ENCODE measurements at regions of chr5 and their contacts with region 1.

Region 1: GRCh38 chr5:66987949-66988838 is 208.4 kb downstream of the CD180 start:
- DNase-seq: peak; percentile 53
- H3K4me3 ChIP-seq: no peak overlapping the region
- H3K27ac ChIP-seq: no peak overlapping the region
- H3K4me1 ChIP-seq: no peaks in the 10 kb centered on the region
- H3K27me3 ChIP-seq: no peaks in the 10 kb centered on the region
- CTCF ChIP-seq: peak; percentile 54 to 61
- POLR2A ChIP-seq: no peak

Region 2: GRCh38 chr5:67003935-67004729 is 15.9 kb after region 1 on chr5:
- CTCF ChIA-PET with region 1: interaction called, 15 read pairs
- POLR2A ChIA-PET with region 1: no interaction called
- dilution Hi-C with region 1: no loop called
- intact Hi-C with region 1: no loop called
- DNase-seq: peak; percentile 99
- H3K4me3 ChIP-seq: peak overlapping the region; percentile 52 to 93 (median 87)
- H3K27ac ChIP-seq: peak overlapping the region; percentile 94
- H3K4me1 ChIP-seq: peaks cover 37% of the 10 kb centered on the region
- H3K27me3 ChIP-seq: no peaks in the 10 kb centered on the region
- CTCF ChIP-seq: no peak
- POLR2A ChIP-seq: peak; percentile 95

Region 3: GRCh38 chr5:67059744-67060490 is 71.7 kb after region 1 on chr5:
- CTCF ChIA-PET with region 1: interaction called, 12 read pairs
- POLR2A ChIA-PET with region 1: no interaction called
- dilution Hi-C with region 1: no loop called
- intact Hi-C with region 1: loop called (anchors 2 kb)
- DNase-seq: peak; percentile 82
- H3K4me3 ChIP-seq: peak overlapping the region in 1 of 3 experiments; percentile 30
- H3K27ac ChIP-seq: peak overlapping the region; percentile 89
- H3K4me1 ChIP-seq: peaks cover 68% of the 10 kb centered on the region
- H3K27me3 ChIP-seq: no peaks in the 10 kb centered on the region
- CTCF ChIP-seq: no peak
- POLR2A ChIP-seq: no peak

Region 4: DNA sequence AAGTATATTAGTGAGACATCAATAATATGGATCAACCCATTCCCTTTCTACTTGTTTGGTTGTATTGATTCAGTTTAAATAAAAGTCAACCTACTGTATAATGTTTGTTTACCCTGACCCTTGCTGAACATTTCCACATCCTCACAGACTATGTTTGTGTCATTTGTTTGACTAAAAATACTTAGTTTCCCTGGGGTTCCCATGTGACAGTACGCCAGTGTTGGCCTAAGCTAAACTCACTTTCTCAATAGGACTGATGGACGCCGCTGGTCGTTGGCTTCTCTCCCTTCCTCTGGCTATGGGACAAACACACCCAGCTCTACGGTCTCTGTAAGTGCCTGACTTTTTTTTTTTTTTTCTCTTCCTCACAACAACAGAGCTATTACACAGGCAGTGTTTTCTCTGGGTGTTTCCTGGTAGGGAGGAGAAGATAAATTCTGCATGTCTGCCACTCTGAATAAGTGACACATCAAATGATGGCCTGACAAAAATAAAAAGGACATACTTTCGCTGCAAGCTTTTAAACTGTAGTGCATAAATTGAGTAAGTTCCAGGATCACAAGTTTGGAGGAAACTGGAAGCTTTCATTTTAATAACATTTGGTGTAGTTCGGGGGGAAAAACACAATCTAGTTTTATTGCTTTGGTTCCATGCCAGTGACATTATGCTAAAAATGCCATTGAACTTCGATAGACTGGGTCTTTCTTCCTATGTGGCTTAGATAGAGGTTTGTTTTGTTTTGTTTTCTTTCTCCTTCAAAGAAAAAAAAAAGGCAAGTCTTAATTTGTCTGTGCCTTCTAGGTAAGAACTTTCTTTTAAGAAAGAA is 107.4 kb after region 1 on chr5:
- CTCF ChIA-PET with region 1: interaction called, 5 read pairs
- POLR2A ChIA-PET with region 1: no interaction called
- dilution Hi-C with region 1: no loop called
- intact Hi-C with region 1: loop called (anchors 5 kb)
- DNase-seq: peak; percentile 78
- H3K4me3 ChIP-seq: no peak overlapping the region
- H3K27ac ChIP-seq: no peak overlapping the region
- H3K4me1 ChIP-seq: peaks cover 17% of the 10 kb centered on the region
- H3K27me3 ChIP-seq: no peaks in the 10 kb centered on the region
- CTCF ChIP-seq: no peak
- POLR2A ChIP-seq: no peak

Region 5: GRCh38 chr5:67209142-67209771 is 221.1 kb after region 1 on chr5:
- CTCF ChIA-PET with region 1: interaction called, 4 read pairs
- POLR2A ChIA-PET with region 1: no interaction called
- dilution Hi-C with region 1: no loop called
- intact Hi-C with region 1: loop called (anchors 1 kb)
- DNase-seq: peak; percentile 77
- H3K4me3 ChIP-seq: no peak overlapping the region
- H3K27ac ChIP-seq: no peak overlapping the region
- H3K4me1 ChIP-seq: peaks cover 3% of the 10 kb centered on the region
- H3K27me3 ChIP-seq: no peaks in the 10 kb centered on the region
- CTCF ChIP-seq: peak; percentile 67
- POLR2A ChIP-seq: no peak

Region 6: GRCh38 chr5:67287510-67288268 is 299.5 kb after region 1 on chr5:
- CTCF ChIA-PET with region 1: no interaction called
- POLR2A ChIA-PET with region 1: no interaction called
- dilution Hi-C with region 1: no loop called
- intact Hi-C with region 1: no loop called
- DNase-seq: no peak
- H3K4me3 ChIP-seq: no peak overlapping the region
- H3K27ac ChIP-seq: no peak overlapping the region
- H3K4me1 ChIP-seq: peaks cover 9% of the 10 kb centered on the region
- H3K27me3 ChIP-seq: no peaks in the 10 kb centered on the region
- CTCF ChIP-seq: no peak
- POLR2A ChIP-seq: no peak

Region 7: DNA sequence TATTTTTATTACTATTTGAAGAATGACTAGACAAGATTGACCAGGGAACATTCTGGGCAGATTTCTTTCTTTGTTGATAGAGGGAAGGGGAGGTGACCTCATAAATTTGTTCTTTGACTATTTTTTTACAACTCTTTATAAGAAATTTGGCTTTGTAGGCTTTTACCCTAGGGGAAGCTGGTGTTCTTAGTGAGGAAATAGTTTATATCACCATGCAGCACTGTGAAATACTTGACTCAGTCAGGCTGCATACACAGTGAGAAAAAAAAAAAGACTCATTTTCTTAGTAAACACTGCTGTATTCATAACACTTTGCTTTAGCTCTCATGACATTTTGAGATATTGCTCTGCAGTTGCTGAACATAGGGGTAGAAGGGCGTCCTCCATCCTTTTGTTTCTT is 890.7 kb after region 1 on chr5:
- CTCF ChIA-PET with region 1: no interaction called
- POLR2A ChIA-PET with region 1: no interaction called
- dilution Hi-C with region 1: no loop called
- intact Hi-C with region 1: no loop called
- DNase-seq: no peak
- H3K4me3 ChIP-seq: no peak overlapping the region
- H3K27ac ChIP-seq: no peak overlapping the region
- H3K4me1 ChIP-seq: no peaks in the 10 kb centered on the region
- H3K27me3 ChIP-seq: no peaks in the 10 kb centered on the region
- CTCF ChIP-seq: no peak
- POLR2A ChIP-seq: no peak

Measured in endothelial cell of umbilical vein (primary cell).